HepG2 (cell line): ENCODE measurements at regions of chr1 and their contacts with region 1.

Region 1: DNA sequence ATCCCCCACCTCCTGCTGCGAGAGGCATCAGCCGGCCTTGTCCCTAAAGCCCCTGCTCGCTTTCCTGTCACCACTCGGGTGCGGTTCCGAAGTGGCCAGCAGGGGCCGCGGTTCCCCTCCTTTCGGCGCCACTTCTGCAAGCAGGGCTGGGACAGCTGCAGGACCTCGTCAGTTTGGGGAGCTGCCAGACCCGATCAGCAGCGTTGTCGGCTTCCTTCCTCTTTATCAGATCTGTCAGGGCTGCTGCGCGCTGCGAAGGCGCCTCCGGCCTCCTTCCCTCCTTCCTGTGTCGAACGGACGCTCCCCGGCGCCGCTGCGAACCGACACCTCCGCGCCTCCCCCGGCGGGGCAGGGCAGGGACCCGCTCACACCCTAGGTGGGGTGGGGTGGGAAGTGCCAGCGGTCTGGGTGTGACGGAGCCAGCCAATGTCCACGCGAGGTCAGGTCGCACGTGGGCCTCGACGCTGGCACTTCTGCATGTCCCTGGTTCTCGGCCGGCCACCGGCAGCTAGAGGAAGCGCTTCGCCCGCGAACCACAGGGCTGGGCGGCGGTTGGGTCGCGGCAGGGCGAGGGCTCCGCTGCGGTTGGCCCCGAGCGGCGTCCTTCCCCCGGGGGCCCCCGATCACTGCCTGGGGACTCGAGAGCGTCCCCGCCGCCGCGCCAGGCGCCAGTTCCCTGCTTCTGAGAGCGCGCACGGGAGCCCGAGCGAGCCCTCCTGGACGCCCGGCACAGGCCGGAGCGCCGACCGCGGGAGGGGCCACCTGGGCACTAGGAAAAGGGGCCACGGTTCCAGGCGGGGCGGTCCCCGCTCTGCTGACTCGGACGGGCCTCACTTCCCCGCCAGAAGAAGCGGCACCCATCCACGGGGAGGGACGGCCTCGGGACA is 81.8 kb downstream of the RUNX3 start:
- DNase-seq: peak; percentile 64
- ATAC-seq: peak; percentile 94
- H3K4me3 ChIP-seq: peak overlapping the region; percentile 61 to 83 (median 65)
- H3K27ac ChIP-seq: no peak overlapping the region
- H3K4me1 ChIP-seq: peaks cover 18% of the 10 kb centered on the region
- H3K27me3 ChIP-seq: peaks cover 0 to 8% of the 10 kb centered on the region in 2 experiments; a peak in 2 of 5 replicates
- CTCF ChIP-seq: peak; percentile 98
- EP300 ChIP-seq: no peak
- POLR2A ChIP-seq: no peak
- RAD21 ChIP-seq: peak; percentile 95

Region 2: GRCh38 chr1:24897767-24898483 is 49.7 kb after region 1 on chr1:
- CTCF ChIA-PET with region 1: interaction called, 20 read pairs
- POLR2A ChIA-PET with region 1: no interaction called
- in situ Hi-C with region 1: no loop called
- intact Hi-C with region 1: loop called (anchors 1 kb)
- DNase-seq: no peak
- ATAC-seq: peak; percentile 90
- H3K4me3 ChIP-seq: no peak overlapping the region
- H3K27ac ChIP-seq: no peak overlapping the region
- H3K4me1 ChIP-seq: no peaks in the 10 kb centered on the region
- H3K27me3 ChIP-seq: peaks cover 1 to 23% of the 10 kb centered on the region in 2 experiments; a peak in 4 of 5 replicates
- CTCF ChIP-seq: peak; percentile 96
- EP300 ChIP-seq: no peak
- POLR2A ChIP-seq: no peak
- RAD21 ChIP-seq: peak; percentile 77

Region 3: DNA sequence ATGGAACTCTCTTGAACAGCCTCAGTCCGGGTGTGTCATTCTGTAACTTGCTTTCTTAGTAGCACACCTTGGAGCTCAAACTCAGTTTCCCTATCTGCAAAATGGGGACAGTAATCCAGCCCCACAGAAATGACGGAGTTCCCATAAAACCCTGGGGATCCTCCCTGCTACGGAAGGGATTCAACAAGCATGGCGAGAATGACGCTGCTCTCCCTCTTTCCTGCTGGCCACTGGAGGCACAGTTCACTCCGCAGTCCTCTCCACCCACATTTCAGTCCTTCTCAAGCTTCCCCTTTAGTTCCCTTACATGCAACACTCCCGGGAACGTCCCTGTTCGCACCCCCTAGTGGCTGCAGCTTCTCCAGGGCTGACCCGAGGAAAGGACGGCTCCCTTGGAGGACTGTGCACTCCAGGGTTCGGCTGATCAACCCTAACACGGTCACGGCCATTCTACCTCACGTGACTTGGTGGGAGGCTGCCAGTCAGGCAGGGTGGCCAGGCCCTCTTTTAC is 61.2 kb after region 1 on chr1:
- CTCF ChIA-PET with region 1: interaction called, 4 read pairs
- POLR2A ChIA-PET with region 1: interaction called, 5 read pairs
- in situ Hi-C with region 1: loop called (anchors 5 kb)
- intact Hi-C with region 1: no loop called
- DNase-seq: peak; percentile 76
- ATAC-seq: peak; percentile 57
- H3K4me3 ChIP-seq: no peak overlapping the region; a peak in 1 of 6 replicates
- H3K27ac ChIP-seq: peak overlapping the region; percentile 34
- H3K4me1 ChIP-seq: peaks cover 60% of the 10 kb centered on the region
- H3K27me3 ChIP-seq: no peaks in the 10 kb centered on the region
- CTCF ChIP-seq: peak; percentile 74
- EP300 ChIP-seq: no peak
- POLR2A ChIP-seq: no peak
- RAD21 ChIP-seq: peak; percentile 49; the same call in 1 of the 2 replicates

Region 4: DNA sequence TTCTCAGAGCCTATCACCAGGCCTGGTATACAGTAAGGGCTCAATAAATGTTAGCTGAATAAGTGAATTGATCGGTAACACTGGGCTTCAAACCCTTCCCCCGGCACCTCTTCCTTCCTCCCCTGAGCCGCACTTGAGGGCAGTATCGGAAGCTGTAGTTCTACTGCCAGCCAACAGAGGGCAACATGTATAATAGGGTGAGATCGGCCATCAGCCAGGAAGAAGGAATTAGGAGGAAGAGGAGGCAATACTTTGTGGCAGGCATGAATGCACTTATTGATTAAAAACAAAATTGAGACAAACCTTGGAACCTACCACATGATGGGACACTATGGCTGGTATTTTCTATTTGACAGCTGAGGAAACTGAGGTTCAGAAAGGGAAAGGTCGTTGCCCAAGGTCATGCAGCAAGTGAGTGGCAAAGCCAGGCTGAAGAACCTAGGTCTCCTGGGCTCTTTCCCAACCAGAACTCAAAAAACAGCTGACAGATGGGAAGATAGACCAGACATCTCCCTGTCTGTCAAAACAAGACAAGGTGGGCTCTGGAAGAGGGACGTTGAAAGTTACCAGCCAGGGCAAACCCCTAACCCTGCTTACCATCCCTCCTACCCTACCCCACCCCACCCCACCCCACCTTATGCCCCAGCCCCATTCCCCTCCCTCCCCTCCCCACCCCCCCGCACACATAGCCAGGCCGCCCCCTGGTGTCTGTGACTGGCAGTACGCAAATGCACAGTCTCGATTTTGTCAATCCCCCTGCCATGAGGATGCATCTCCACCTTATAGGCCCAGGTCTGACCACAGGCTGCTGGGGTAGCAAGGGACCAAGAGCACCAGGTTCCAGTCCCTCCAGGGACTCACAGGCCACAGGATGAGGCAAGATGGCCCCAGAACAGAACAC is 189.2 kb after region 1 on chr1:
- CTCF ChIA-PET with region 1: interaction called, 6 read pairs
- POLR2A ChIA-PET with region 1: no interaction called
- in situ Hi-C with region 1: loop called (anchors 5 kb)
- intact Hi-C with region 1: no loop called
- DNase-seq: peak; percentile 41
- ATAC-seq: peak; percentile 57
- H3K4me3 ChIP-seq: no peak overlapping the region
- H3K27ac ChIP-seq: no peak overlapping the region
- H3K4me1 ChIP-seq: peaks cover 7% of the 10 kb centered on the region; the same call in 1 of the 2 replicates
- H3K27me3 ChIP-seq: peaks cover 3 to 23% of the 10 kb centered on the region in 2 experiments; a peak in 2 of 5 replicates
- CTCF ChIP-seq: peak; percentile 65
- EP300 ChIP-seq: no peak
- POLR2A ChIP-seq: no peak
- RAD21 ChIP-seq: peak; percentile 26; the same call in 1 of the 2 replicates

Region 5: GRCh38 chr1:25048728-25049127 is 200.5 kb after region 1 on chr1:
- CTCF ChIA-PET with region 1: no interaction called
- POLR2A ChIA-PET with region 1: no interaction called
- in situ Hi-C with region 1: no loop called
- intact Hi-C with region 1: no loop called
- DNase-seq: no peak
- ATAC-seq: no peak
- H3K4me3 ChIP-seq: no peak overlapping the region
- H3K27ac ChIP-seq: no peak overlapping the region
- H3K4me1 ChIP-seq: no peaks in the 10 kb centered on the region
- H3K27me3 ChIP-seq: peaks cover 6 to 38% of the 10 kb centered on the region in 2 experiments; a peak in 3 of 5 replicates
- CTCF ChIP-seq: no peak
- EP300 ChIP-seq: no peak
- POLR2A ChIP-seq: no peak
- RAD21 ChIP-seq: no peak

Region 6: DNA sequence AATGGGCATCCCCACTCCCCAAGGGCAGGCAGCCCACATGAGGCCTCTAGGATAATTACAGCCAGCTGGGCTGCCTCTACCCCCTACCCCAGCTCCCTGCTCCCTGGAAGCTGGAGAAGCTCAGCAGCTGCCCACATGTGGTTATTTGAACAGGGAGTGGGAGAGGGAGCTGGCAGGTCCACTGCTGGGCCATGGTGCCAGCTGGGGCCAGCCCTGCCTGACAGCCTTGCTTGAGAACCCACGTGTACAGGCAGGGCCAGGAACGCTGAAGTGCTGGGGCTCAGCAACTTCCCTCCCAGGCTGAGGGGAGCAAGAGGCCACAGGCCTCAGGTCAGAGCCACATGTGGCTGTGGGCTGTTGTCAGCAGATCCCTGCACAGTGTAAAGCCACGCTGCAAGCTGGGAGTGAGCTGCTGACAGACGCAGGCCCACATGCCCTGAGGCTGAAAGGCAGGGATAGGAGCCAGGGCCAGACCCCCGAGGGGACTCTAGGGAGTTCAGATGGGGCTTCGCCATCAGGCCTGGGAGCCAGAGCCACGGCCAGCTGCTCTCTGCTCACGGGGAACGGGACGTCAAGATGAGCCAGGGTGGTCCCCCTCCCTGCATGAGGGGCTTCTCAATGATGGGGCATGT is 255.0 kb after region 1 on chr1:
- CTCF ChIA-PET with region 1: interaction called, 3 read pairs
- POLR2A ChIA-PET with region 1: no interaction called
- in situ Hi-C with region 1: no loop called
- intact Hi-C with region 1: loop called (anchors 2 kb)
- DNase-seq: no peak
- ATAC-seq: no peak
- H3K4me3 ChIP-seq: no peak overlapping the region
- H3K27ac ChIP-seq: no peak overlapping the region
- H3K4me1 ChIP-seq: peaks cover 30% of the 10 kb centered on the region
- H3K27me3 ChIP-seq: peaks cover 0 to 26% of the 10 kb centered on the region in 2 experiments; a peak in 3 of 5 replicates
- CTCF ChIP-seq: no peak
- EP300 ChIP-seq: no peak
- POLR2A ChIP-seq: no peak
- RAD21 ChIP-seq: no peak